Naive thymus-derived CD4-positive, alpha-beta T cell (primary cell): ENCODE measurements at regions of chr13 and their contacts with region 1.

Region 1: GRCh38 chr13:30679483-30680330 is 55.6 kb upstream of the ALOX5AP start:
- DNase-seq: peak in 6 of 9 donors; percentile 19 to 49 (median 36)
- ATAC-seq: peak; percentile 90
- H3K4me3 ChIP-seq: no peak overlapping the region
- H3K4me3 Mint-ChIP-seq: peak overlapping the region in 1 of 10 donors; percentile 1
- H3K27ac ChIP-seq: no peak overlapping the region
- H3K27ac Mint-ChIP-seq: peak overlapping the region in 5 of 9 donors; percentile 34 to 76 (median 42)
- H3K4me1 ChIP-seq: no peaks in the 10 kb centered on the region
- H3K4me1 Mint-ChIP-seq: peaks cover 4 to 15% (median 10%) of the 10 kb centered on the region in 7 donors
- H3K27me3 ChIP-seq: no peaks in the 10 kb centered on the region
- H3K27me3 Mint-ChIP-seq: peaks cover 0 to 26% (median 0%) of the 10 kb centered on the region in 5 donors

Region 2: DNA sequence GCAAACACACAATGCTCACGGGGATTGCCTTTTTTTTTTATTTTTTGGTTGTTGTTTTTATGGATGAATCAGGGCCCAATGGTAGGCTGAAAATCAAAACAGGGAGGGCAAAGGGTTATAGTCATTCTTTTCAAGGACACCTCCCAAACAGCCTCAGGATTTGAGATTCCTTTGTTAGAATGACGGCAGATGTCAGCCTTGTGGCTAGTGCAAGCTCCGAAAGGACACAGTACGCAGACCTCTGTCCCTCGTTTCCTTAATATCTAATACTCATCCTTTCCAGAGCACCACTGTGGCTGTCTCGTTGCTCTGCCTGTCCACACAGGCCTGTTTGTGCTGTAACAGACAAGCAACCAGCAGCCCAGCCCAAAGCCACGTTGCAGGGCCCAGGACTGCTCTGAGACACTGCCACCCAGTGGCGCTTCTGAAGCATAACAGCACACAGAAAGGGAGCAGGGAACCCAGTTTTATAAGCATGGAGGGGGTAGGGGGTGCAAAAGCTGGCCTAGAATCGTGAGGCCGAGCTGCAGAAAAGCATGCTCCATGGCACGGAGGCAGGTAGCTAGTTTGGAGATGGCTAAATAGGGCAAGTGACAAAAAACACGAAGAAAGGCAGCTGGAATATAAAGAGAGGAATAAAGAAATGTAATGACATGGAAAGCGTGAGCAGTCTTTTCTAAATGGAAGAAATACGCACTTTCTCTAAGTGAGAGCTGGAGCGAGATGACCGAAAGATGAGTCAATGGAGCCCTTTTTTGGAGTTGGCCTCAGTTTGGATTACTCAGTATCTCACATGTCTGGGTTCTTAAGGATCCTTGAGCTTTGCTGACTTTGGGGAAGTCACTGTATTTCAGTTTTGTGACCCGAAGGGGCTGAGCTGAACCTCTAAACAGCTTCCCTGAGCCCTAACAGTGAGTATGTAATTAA is 185.7 kb after region 1 on chr13:
- CTCF ChIA-PET with region 1: no interaction called
- POLR2A ChIA-PET with region 1: no interaction called
- intact Hi-C with region 1: loop called (anchors 1 to 5 kb)
- DNase-seq: peak; percentile 7 to 46 (median 34)
- ATAC-seq: peak; percentile 91
- H3K4me3 ChIP-seq: no peak overlapping the region
- H3K4me3 Mint-ChIP-seq: no peak overlapping the region
- H3K27ac ChIP-seq: no peak overlapping the region
- H3K27ac Mint-ChIP-seq: no peak overlapping the region
- H3K4me1 ChIP-seq: no peaks in the 10 kb centered on the region
- H3K4me1 Mint-ChIP-seq: peaks cover 0 to 9% (median 4%) of the 10 kb centered on the region in 7 donors
- H3K27me3 ChIP-seq: no peaks in the 10 kb centered on the region
- H3K27me3 Mint-ChIP-seq: peaks cover 5 to 25% (median 8%) of the 10 kb centered on the region in 5 donors